ENCODE measurements at regions of chr11 and their contacts with region 1.

Region 1: DNA sequence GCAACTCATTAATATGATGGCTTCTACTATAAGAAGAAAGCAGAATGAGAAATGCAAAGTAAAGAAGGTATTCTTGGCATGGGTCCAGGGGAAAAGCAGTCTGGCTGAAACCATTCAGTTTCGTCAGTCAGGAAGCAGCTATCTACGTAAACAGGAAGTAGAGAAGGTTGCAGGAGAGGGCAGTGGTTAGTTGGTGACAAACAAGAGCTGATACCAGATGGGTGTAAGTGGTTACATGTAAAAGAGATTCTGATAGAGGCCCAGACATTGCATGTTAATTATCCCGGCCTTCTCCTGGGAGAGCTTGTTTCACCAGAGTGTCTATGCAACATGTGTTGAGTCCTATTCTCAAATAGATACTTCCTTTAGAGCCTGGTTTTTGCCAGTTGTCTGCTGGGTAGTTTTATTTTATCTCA is 58.4 kb upstream of the PSMA1 start:
- DNase-seq: peak; percentile 67
- H3K4me3 Mint-ChIP-seq: peak overlapping the region; percentile 11
- H3K27ac Mint-ChIP-seq: peak overlapping the region; percentile 75
- H3K4me1 Mint-ChIP-seq: peaks cover 47% of the 10 kb centered on the region
- H3K27me3 Mint-ChIP-seq: no peaks in the 10 kb centered on the region

Region 2: DNA sequence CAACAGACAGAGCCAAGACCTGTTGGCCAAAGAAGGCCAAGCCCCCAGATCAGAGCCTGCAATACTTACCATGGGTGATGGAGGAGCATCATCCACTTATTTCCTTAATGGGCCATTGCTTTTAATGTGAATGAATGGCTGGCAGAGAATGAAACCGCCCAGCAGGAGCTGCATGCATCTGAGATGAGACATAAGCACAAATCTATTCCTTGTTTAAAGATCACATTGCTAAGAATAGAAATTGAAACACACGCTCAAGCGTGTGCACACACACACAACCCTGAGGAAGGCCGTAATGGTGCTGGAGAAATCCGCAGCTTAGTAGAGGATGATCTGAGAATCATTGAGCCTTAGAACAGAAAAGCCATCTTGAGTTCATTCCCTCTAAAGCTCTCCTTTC is 214.2 kb before region 1 on chr11:
- CTCF ChIA-PET with region 1: no interaction called
- intact Hi-C with region 1: no loop called
- DNase-seq: no peak
- H3K4me3 Mint-ChIP-seq: no peak overlapping the region
- H3K27ac Mint-ChIP-seq: no peak overlapping the region
- H3K4me1 Mint-ChIP-seq: peaks cover 6% of the 10 kb centered on the region
- H3K27me3 Mint-ChIP-seq: no peaks in the 10 kb centered on the region

Region 3: DNA sequence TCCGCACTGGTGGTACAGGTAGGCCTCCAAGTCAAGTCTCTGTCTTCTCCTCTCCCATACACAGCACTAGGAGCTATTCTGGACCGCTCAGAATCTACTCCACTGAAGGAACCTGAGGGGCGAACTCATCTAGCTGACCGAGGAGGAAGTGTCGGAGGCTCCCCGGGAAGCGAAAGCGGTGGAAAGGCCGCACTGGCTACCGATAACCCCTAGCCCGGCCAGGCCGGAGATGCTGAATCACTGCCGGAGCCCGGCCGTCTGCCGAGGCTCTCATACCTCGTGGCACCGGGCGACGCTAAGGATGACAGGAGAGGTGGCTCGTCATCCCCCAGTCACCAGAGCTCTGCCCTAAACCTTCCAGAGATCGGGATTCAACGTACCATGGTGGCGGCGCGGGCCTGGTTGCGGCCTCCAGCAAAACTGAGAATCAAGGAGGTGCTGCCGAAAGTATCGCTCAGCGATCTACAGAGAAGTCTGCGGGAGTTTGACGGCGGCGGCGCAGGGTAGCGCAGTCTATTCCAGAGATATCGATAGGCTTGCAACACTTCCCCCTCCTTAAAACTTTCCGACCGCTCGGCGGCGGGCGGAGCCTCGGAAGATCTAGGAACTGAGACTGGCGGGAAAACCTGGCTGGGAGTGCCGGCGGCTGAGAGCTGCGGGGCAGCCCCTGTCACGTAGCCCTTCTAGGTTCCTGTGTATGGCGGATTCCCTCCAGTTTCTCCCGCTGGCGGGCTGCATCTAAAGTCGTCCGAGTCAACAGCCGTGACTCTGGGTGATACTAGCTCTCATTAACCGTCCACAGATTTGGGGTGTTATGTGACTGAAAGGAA is 58.4 kb before region 1 on chr11 and contains the start of gene PSMA1:
- CTCF ChIA-PET with region 1: no interaction called
- intact Hi-C with region 1: loop called (anchors 1 kb)
- DNase-seq: peak; percentile 98
- H3K4me3 Mint-ChIP-seq: peak within 1 kb of the TSS; percentile 96
- H3K27ac Mint-ChIP-seq: peak within 1 kb of the TSS; percentile 97
- H3K4me1 Mint-ChIP-seq: peaks cover 24% of the 10 kb centered on the region
- H3K27me3 Mint-ChIP-seq: no peaks in the 10 kb centered on the region
- total RNA-seq, gene PSMA1: 367 to 375 TPM

Region 4: GRCh38 chr11:14554959-14555358 is 23.6 kb before region 1 on chr11:
- CTCF ChIA-PET with region 1: interaction called, 7 read pairs
- intact Hi-C with region 1: loop called (anchors 1 kb)
- DNase-seq: peak; percentile 38
- H3K4me3 Mint-ChIP-seq: no peak overlapping the region
- H3K27ac Mint-ChIP-seq: peak overlapping the region; percentile 63
- H3K4me1 Mint-ChIP-seq: peaks cover 35% of the 10 kb centered on the region
- H3K27me3 Mint-ChIP-seq: no peaks in the 10 kb centered on the region

Region 5: GRCh38 chr11:14611939-14612338 is 33.4 kb after region 1 on chr11:
- CTCF ChIA-PET with region 1: interaction called, 4 read pairs
- intact Hi-C with region 1: loop called (anchors 2 kb)
- DNase-seq: peak; percentile 54
- H3K4me3 Mint-ChIP-seq: no peak overlapping the region
- H3K27ac Mint-ChIP-seq: peak overlapping the region; percentile 74
- H3K4me1 Mint-ChIP-seq: peaks cover 32% of the 10 kb centered on the region
- H3K27me3 Mint-ChIP-seq: no peaks in the 10 kb centered on the region

Region 6: DNA sequence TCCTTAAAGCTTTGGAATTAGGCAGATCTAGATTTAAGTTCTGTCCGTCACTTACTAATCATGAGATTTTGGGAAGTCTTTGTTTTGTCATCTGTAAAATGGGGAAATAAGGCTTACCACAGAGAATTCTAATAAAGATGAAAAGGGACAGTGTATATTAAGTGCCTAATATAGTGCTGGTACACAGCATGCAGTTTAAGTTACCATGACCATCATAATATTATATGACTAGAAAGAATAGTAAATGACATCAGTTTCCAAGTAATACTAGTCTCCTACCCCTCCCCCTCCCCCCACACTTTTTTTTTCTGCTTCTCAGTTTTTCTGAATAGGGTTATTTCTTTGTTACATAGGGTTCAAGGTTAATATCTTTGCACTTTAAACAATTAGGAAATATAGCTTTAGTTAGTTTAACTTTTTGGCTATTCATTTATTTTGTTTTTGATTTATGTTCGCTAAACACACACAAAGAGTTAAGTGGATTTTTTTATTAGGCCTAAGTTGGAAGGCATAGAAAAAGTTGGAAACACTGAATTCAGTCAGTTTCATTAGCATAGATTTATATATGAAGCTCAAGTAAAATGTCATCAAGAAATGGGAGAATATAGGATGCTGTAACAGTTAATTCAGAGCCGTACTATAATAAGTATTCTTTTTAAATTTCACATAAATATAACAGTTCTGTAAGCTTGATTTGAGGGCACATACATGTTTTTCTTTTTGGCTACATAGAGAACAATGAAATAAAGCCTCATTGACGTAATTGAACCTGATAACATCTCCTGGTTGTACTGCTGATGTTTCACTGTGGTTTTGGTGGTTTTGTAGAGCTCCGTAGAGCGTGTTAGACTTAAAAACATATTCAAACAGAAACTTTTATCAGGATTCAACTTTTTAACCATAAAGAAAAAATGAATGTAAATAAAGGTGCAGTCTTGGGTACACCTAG is 186.3 kb after region 1 on chr11:
- CTCF ChIA-PET with region 1: no interaction called
- intact Hi-C with region 1: loop called (anchors 1 kb)
- DNase-seq: peak; percentile 58
- H3K4me3 Mint-ChIP-seq: peak overlapping the region; percentile 41
- H3K27ac Mint-ChIP-seq: no peak overlapping the region
- H3K4me1 Mint-ChIP-seq: peaks cover 45% of the 10 kb centered on the region
- H3K27me3 Mint-ChIP-seq: no peaks in the 10 kb centered on the region

Region 7: GRCh38 chr11:14942745-14943144 is 364.2 kb after region 1 on chr11:
- CTCF ChIA-PET with region 1: no interaction called
- intact Hi-C with region 1: no loop called
- DNase-seq: no peak
- H3K4me3 Mint-ChIP-seq: no peak overlapping the region
- H3K27ac Mint-ChIP-seq: no peak overlapping the region
- H3K4me1 Mint-ChIP-seq: no peaks in the 10 kb centered on the region
- H3K27me3 Mint-ChIP-seq: no peaks in the 10 kb centered on the region

Region 8: DNA sequence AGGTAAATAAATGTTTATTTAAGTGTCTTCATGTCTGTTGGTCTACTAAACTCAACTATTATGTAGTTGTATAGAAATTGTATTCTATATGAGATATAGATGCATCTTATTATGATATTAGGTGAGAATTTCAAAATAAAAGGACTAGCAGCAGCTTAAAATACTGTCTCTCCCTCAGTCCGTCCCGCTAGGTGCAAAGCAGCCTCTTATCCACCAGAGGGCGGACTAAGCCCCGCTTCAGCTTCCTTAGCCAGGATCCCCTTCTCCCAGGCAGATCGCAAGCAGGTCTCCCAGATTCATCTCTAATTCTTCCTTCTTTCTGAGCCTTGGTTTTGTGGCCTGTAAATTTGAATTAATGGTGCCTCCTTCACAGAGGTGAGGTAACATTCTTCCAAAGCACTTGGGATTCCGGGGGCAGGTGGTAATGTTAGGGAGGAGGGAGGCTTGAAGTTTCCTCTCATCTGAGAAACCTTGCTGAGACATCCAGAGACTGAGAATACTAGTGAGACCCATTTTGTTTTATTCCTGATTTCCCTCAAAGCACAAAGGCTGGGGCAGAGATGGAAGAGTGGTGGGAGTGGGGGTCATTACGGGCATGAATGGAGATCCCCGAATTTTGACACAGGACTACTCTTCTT is 522.6 kb after region 1 on chr11:
- CTCF ChIA-PET with region 1: no interaction called
- intact Hi-C with region 1: no loop called
- DNase-seq: peak; percentile 71
- H3K4me3 Mint-ChIP-seq: no peak overlapping the region
- H3K27ac Mint-ChIP-seq: no peak overlapping the region
- H3K4me1 Mint-ChIP-seq: no peaks in the 10 kb centered on the region
- H3K27me3 Mint-ChIP-seq: peaks cover 10% of the 10 kb centered on the region

Region 9: GRCh38 chr11:15300341-15300740 is 721.8 kb after region 1 on chr11:
- CTCF ChIA-PET with region 1: no interaction called
- intact Hi-C with region 1: no loop called
- DNase-seq: no peak
- H3K4me3 Mint-ChIP-seq: no peak overlapping the region
- H3K27ac Mint-ChIP-seq: no peak overlapping the region
- H3K4me1 Mint-ChIP-seq: no peaks in the 10 kb centered on the region
- H3K27me3 Mint-ChIP-seq: peaks cover 9% of the 10 kb centered on the region

Measured in activated naive CD4-positive, alpha-beta T cell treated with anti-CD3 and anti-CD28 coated beads for 36 hours (primary cell).